Mucosa of descending colon (tissue), 3 donors: ENCODE measurements at regions of chr16 and their contacts with region 1.

Region 1: GRCh38 chr16:62130101-62130500 is 93.9 kb upstream of the CDH8 start:
- DNase-seq: no peak
- ATAC-seq: no peak
- H3K4me3 ChIP-seq: no peak overlapping the region
- H3K4me1 ChIP-seq: no peaks in the 10 kb centered on the region
- CTCF ChIP-seq: no peak

Region 2: GRCh38 chr16:62068747-62069146 is 61.4 kb before region 1 on chr16:
- intact Hi-C with region 1: loop called in 1 of 2 experiments (anchors 10 kb)
- DNase-seq: no peak
- ATAC-seq: no peak
- H3K4me3 ChIP-seq: no peak overlapping the region
- H3K4me1 ChIP-seq: no peaks in the 10 kb centered on the region
- CTCF ChIP-seq: no peak

Region 3: GRCh38 chr16:62408760-62409159 is 278.7 kb after region 1 on chr16:
- intact Hi-C with region 1: no loop called
- DNase-seq: peak in 1 of 3 donors; percentile 41
- ATAC-seq: no peak
- H3K4me3 ChIP-seq: no peak overlapping the region
- H3K4me1 ChIP-seq: no peaks in the 10 kb centered on the region
- CTCF ChIP-seq: no peak